Heart left ventricle (tissue), 16 donors: ENCODE measurements at regions of chr6 and their contacts with region 1.

Region 1: GRCh38 chr6:33727932-33728331 is 16.4 kb upstream of the UQCC2 start:
- DNase-seq: peak; percentile 68 to 84 (median 80)
- ATAC-seq: peak; percentile 52 to 75 (median 66)
- H3K4me3 ChIP-seq: no peak overlapping the region
- H3K27ac ChIP-seq: peak overlapping the region; percentile 42 to 91 (median 80)
- H3K4me1 ChIP-seq: peaks cover 3 to 77% (median 35%) of the 10 kb centered on the region in 12 donors
- H3K27me3 ChIP-seq: peaks cover 0 to 4% (median 0%) of the 10 kb centered on the region in 9 donors
- CTCF ChIP-seq: no peak
- POLR2A ChIP-seq: no peak

Region 2: DNA sequence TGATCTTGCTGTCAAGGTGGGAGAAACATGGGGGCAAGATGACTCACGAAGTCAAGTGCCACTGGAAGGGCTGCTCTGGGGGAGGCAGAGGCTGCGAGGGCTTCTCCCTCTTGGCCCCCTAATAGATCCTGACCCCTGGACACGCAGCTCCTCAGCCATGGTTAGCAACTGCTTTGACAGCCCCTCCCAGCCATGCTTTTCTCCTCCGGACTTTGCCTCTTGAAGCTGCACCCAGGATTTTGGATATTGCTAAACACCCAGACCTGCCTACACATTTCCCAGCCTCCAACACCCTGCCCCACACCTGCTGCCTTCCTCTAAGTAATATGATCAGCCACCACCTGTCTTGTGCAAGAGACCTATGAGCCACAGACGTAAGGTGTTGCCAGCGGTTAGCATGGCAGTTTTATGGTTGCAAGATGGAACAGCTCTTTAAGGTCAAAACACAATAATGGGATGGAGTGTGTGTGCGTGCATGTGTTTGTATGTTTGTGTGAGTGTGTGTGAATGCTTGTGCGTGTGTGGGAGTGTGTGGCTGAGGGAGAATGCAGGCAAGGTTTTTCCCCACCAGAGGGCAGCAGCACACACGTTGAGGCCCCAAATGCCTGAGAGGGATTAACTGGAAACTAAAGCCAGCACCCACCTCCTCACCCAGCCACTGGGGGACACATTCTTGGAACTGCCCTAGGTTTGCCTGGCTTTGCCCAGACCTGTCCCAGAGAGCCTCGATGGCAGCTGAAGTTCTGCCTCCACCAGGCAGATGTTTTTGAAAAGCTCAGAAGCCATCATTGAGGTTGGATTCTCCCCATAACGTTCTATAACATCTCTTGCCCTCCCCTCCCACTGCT is 16.3 kb after region 1 on chr6:
- intact Hi-C with region 1: loop called in 1 of 10 experiments (anchors 2 kb)
- DNase-seq: peak in 4 of 5 donors; percentile 59 to 72 (median 70)
- ATAC-seq: peak in 3 of 4 donors; percentile 6 to 34 (median 20)
- H3K4me3 ChIP-seq: peak overlapping the region in 11 of 12 donors; percentile 42 to 80 (median 57)
- H3K27ac ChIP-seq: peak overlapping the region; percentile 74 to 99 (median 92)
- H3K4me1 ChIP-seq: peaks cover 0 to 68% (median 26%) of the 10 kb centered on the region in 12 donors
- H3K27me3 ChIP-seq: peaks cover 0 to 5% (median 0%) of the 10 kb centered on the region in 9 donors
- CTCF ChIP-seq: peak; percentile 77 to 90 (median 86)
- POLR2A ChIP-seq: peak in 1 of 2 donors; percentile 18

Region 3: GRCh38 chr6:33761922-33762629 is 34.1 kb after region 1 on chr6:
- intact Hi-C with region 1: loop called in 1 of 10 experiments (anchors 5 kb)
- DNase-seq: peak; percentile 79 to 94 (median 88)
- ATAC-seq: peak; percentile 83 to 95 (median 90)
- H3K4me3 ChIP-seq: no peak overlapping the region
- H3K27ac ChIP-seq: peak overlapping the region in 10 of 12 donors; percentile 51 to 86 (median 74)
- H3K4me1 ChIP-seq: peaks cover 0 to 26% (median 15%) of the 10 kb centered on the region in 12 donors
- H3K27me3 ChIP-seq: no peaks in the 10 kb centered on the region
- CTCF ChIP-seq: peak; percentile 56 to 81 (median 68)
- POLR2A ChIP-seq: no peak

Region 4: DNA sequence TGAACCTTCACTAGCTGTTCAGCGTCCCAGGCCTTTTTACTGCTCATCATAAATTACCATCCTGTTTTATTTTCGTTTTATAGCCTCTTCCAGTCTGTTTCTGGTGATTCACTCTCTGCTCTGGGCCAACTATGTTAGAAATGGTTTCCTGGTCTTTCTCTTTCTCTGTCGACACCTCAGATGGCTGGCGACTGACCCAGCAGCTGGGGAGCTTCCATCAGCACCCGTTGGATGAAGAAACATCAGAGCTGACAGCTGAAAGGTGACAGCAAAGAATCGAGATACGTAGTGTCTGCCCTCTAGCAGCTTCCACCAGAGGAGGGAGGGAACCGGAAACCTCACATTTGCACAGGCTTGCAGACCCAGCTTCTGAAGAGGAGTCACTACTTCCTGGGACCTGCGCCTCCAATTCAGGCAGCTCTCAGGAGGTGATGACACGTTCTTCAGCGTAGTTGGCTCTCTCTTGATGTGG is 158.8 kb after region 1 on chr6:
- intact Hi-C with region 1: no loop called
- DNase-seq: peak; percentile 68 to 82 (median 76)
- ATAC-seq: peak; percentile 89 to 95 (median 93)
- H3K4me3 ChIP-seq: no peak overlapping the region
- H3K27ac ChIP-seq: peak overlapping the region in 4 of 12 donors; percentile 1 to 34 (median 30)
- H3K4me1 ChIP-seq: peaks cover 0 to 20% (median 8%) of the 10 kb centered on the region in 12 donors
- H3K27me3 ChIP-seq: peaks cover 0 to 29% (median 0%) of the 10 kb centered on the region in 9 donors
- CTCF ChIP-seq: no peak
- POLR2A ChIP-seq: no peak